ENCODE measurements at regions of chr14 and their contacts with region 1.

Region 1: GRCh38 chr14:91510174-91511042 is at the start of gene PPP4R3A:
- DNase-seq: peak; percentile 75 to 93
- H3K4me3 ChIP-seq: peak within 1 kb of the TSS; percentile 70 to 98 (median 94)
- H3K27ac ChIP-seq: peak within 1 kb of the TSS; percentile 97
- H3K4me1 ChIP-seq: peaks cover 0 to 2% (median 0%) of the 10 kb centered on the region in 4 experiments; a peak in 1 of 7 replicates
- H3K27me3 ChIP-seq: no peaks in the 10 kb centered on the region
- CTCF ChIP-seq: no peak
- EP300 ChIP-seq: no peak
- POLR2A ChIP-seq: peak; percentile 92 to 95
- RAD21 ChIP-seq: no peak; a peak in 1 of 4 replicates
- total RNA-seq, gene PPP4R3A: 116 and 122 TPM in 2 replicates

Region 2: GRCh38 chr14:91496790-91497189 is 13.6 kb before region 1 on chr14:
- CTCF ChIA-PET with region 1: interaction called, 4 read pairs
- POLR2A ChIA-PET with region 1: interaction called, 27 read pairs
- DNase-seq: no peak
- H3K4me3 ChIP-seq: no peak overlapping the region
- H3K27ac ChIP-seq: no peak overlapping the region
- H3K4me1 ChIP-seq: no peaks in the 10 kb centered on the region; a peak in 1 of 7 replicates
- H3K27me3 ChIP-seq: no peaks in the 10 kb centered on the region
- CTCF ChIP-seq: no peak
- EP300 ChIP-seq: no peak
- POLR2A ChIP-seq: no peak
- RAD21 ChIP-seq: no peak